ENCODE measurements at regions of chr3 and their contacts with region 1.

Region 1: GRCh38 chr3:62325914-62326632 is 47.3 kb downstream of the FEZF2 start:
- DNase-seq: peak in 1 of 2 experiments; percentile 7
- H3K4me3 ChIP-seq: no peak overlapping the region
- H3K4me3 Mint-ChIP-seq: no peak overlapping the region
- H3K27ac Mint-ChIP-seq: no peak overlapping the region
- H3K4me1 ChIP-seq: no peaks in the 10 kb centered on the region
- H3K4me1 Mint-ChIP-seq: no peaks in the 10 kb centered on the region
- H3K27me3 ChIP-seq: no peaks in the 10 kb centered on the region
- H3K27me3 Mint-ChIP-seq: peaks cover 12% of the 10 kb centered on the region
- CTCF ChIP-seq: no peak

Region 2: GRCh38 chr3:62343755-62344154 is 17.7 kb after region 1 on chr3:
- CTCF ChIA-PET with region 1: no interaction called
- POLR2A ChIA-PET with region 1: interaction called, 11 read pairs
- intact Hi-C with region 1: no loop called
- DNase-seq: no peak
- H3K4me3 ChIP-seq: no peak overlapping the region
- H3K4me3 Mint-ChIP-seq: no peak overlapping the region
- H3K27ac Mint-ChIP-seq: no peak overlapping the region
- H3K4me1 ChIP-seq: no peaks in the 10 kb centered on the region
- H3K4me1 Mint-ChIP-seq: no peaks in the 10 kb centered on the region
- H3K27me3 ChIP-seq: no peaks in the 10 kb centered on the region
- H3K27me3 Mint-ChIP-seq: peaks cover 19% of the 10 kb centered on the region
- CTCF ChIP-seq: no peak